Left lung (tissue), 14 donors: ENCODE measurements at regions of chr3 and their contacts with region 1.

Region 1: DNA sequence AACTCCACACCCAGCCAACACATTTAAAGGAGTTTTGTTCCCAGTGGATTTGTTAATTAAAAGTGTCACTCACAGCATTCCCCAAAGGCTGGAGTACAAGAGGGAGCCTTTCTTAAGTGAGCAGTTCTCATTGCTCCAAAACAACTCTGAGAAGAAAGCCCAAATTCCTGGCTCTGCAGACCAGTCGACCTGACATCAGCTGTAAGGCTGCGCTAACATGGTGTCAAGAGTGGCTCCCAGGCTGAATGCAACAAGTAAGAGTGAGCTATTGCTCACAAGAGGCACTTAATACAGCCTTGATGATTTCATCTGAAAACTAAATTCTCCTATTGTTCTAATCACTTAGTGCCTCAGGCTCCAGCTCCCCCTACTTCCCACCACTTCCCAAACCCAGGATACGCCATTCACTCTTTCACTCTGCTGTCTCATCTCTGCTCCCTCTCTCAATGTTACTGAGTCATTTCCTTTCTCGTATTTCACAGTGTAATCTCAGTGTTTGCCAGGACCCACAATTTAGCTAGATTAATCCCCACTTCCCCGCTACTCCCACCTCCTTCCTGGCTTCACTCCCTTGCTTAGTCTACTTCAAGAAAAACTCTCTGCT is 81.8 kb downstream of the WWTR1 start:
- DNase-seq: peak in 1 of 4 donors; percentile 66
- ATAC-seq: peak; percentile 78
- H3K4me3 ChIP-seq: no peak overlapping the region
- H3K27ac ChIP-seq: peak overlapping the region; percentile 71 to 75
- H3K4me1 ChIP-seq: peaks cover 23 to 71% of the 10 kb centered on the region in 2 donors
- H3K27me3 ChIP-seq: no peaks in the 10 kb centered on the region
- CTCF ChIP-seq: no peak

Region 2: DNA sequence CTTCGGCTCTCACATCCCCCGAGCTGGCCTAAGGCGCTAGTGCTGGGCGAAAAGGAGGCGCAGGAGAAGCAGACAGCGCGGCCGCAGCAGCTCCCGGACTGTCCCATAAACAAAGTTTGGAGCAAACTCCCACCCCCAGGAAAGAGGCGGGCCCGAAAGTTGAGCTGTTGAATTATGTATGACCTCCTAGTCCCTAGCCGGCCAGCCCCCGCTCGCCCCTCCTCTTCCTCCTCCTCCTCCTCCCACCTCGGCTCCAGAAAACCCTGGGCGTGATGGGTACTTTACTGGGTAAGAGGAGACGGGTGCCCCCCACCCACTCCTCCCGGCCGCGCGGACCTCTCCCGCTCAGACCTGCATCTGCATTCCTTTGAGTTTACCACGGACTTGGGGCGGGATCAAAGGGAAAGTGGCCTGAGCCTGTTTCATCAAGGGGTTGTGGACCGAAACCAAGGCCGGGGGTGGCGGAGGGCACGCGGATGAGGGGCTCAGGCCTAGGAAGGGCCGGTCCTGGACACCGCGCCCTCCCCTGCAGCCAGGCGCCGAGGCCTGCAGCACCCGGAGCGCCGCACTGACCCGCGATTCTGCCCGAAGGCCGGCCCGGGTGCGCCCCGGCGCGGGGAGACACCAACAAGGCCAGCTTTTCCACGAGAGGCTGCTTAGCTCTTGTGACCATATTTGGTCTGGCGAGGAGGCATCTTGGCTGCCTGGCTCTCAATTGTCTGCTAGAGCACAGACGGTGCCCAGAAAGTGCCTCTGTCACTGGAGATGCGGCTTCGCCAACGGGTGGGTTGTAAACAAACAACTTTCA is 82.1 kb after region 1 on chr3 and contains the start of gene WWTR1:
- intact Hi-C with region 1: loop called in 1 of 2 experiments (anchors 10 kb)
- DNase-seq: peak; percentile 90 to 95 (median 93)
- ATAC-seq: peak; percentile 89
- H3K4me3 ChIP-seq: peak within 1 kb of the TSS; percentile 61 to 64
- H3K27ac ChIP-seq: peak within 1 kb of the TSS; percentile 92 to 99
- H3K4me1 ChIP-seq: peaks cover 13 to 35% of the 10 kb centered on the region in 2 donors
- H3K27me3 ChIP-seq: peaks cover 0 to 87% of the 10 kb centered on the region in 2 donors
- CTCF ChIP-seq: no peak
- polyA plus RNA-seq, gene WWTR1: 103 to 124 (median 110) TPM

Region 3: GRCh38 chr3:149670742-149671492 is 94.9 kb after region 1 on chr3:
- intact Hi-C with region 1: no loop called
- DNase-seq: no peak
- ATAC-seq: no peak
- H3K4me3 ChIP-seq: no peak overlapping the region
- H3K27ac ChIP-seq: no peak overlapping the region
- H3K4me1 ChIP-seq: no peaks in the 10 kb centered on the region
- H3K27me3 ChIP-seq: no peaks in the 10 kb centered on the region
- CTCF ChIP-seq: no peak